ENCODE measurements at regions of chr5 and their contacts with region 1.

Region 1: DNA sequence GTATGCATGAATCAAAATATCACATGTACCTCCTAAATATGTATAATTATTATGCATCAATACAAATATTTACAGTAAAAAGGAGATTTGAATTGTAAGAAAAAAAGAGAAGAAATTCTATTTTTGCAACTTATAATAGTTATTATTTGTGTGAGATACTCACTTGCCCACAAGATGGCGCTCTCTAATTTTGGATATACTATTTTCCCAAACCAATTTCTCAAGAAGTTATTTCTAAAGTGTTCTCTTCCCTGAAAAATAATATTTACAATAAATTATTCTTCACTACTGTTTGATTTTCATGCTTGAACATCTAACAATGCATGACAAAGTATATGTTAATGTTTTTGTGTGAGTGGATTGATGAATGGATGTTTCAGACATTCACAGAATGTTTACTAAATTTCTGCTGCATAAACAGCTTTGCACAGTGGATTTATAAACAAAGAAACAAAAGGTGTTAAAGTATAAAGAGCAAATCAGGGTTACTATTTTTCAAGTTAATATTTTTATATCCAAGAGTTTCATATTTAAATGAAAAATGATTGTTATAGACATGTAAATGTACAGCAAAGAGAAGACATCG is 503.4 kb downstream of the PDE4D start:
- DNase-seq: no peak
- ATAC-seq: no peak
- H3K4me3 ChIP-seq: no peak overlapping the region
- H3K27ac ChIP-seq: no peak overlapping the region
- H3K4me1 ChIP-seq: no peaks in the 10 kb centered on the region
- H3K27me3 ChIP-seq: no peaks in the 10 kb centered on the region
- CTCF ChIP-seq: peak; percentile 32; the same call in 1 of the 2 replicates

Region 2: DNA sequence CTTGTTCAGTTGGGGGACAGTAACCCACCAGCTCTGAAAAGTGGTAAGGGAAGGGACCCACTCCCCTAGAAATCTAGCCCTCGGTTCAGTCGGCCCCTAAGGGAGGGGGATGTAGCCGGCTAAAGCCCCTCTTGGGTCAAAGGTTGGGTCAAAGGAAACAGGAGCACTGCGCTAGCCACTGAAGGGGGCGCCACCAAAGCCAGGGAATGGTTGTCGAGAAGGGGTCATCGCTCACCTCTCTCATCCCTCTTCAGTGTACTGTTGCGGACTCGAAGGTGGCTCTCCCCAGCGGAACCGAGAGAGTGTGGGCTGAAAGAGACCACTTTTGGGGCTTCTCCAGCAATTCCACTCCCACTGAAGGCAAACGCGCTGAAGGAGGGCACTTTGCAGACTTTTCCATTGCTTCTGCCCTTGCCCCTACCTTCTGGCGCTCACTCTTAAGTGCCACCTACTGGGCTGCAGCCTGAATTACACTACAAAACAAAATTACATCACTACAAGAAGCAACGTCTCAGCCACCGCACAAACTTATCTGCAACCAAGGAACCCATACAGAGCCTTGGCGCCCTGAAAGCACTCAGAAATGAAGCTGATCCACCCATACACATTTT is 106.5 kb after region 1 on chr5:
- CTCF ChIA-PET with region 1: no interaction called
- POLR2A ChIA-PET with region 1: no interaction called
- intact Hi-C with region 1: loop called (anchors 1 kb)
- DNase-seq: peak; percentile 39
- ATAC-seq: peak; percentile 27; the same call in 1 of the 2 replicates
- H3K4me3 ChIP-seq: no peak overlapping the region
- H3K27ac ChIP-seq: no peak overlapping the region
- H3K4me1 ChIP-seq: no peaks in the 10 kb centered on the region
- H3K27me3 ChIP-seq: no peaks in the 10 kb centered on the region
- CTCF ChIP-seq: peak; percentile 64

Measured in PC-3 (cell line).